ENCODE measurements at regions of chr6 and their contacts with region 1.

Region 1: GRCh38 chr6:116268589-116269293 is 11.0 kb downstream of the TSPYL1 start:
- DNase-seq: peak; percentile 68
- ATAC-seq: peak; percentile 95
- H3K4me3 ChIP-seq: no peak overlapping the region
- H3K27ac ChIP-seq: no peak overlapping the region
- H3K4me1 ChIP-seq: peaks cover 0 to 10% of the 10 kb centered on the region in 2 experiments; a peak in 2 of 4 replicates
- H3K27me3 ChIP-seq: no peaks in the 10 kb centered on the region
- CTCF ChIP-seq: peak; percentile 84 to 99 (median 96)
- POLR2A ChIP-seq: no peak
- RAD21 ChIP-seq: peak; percentile 88

Region 2: DNA sequence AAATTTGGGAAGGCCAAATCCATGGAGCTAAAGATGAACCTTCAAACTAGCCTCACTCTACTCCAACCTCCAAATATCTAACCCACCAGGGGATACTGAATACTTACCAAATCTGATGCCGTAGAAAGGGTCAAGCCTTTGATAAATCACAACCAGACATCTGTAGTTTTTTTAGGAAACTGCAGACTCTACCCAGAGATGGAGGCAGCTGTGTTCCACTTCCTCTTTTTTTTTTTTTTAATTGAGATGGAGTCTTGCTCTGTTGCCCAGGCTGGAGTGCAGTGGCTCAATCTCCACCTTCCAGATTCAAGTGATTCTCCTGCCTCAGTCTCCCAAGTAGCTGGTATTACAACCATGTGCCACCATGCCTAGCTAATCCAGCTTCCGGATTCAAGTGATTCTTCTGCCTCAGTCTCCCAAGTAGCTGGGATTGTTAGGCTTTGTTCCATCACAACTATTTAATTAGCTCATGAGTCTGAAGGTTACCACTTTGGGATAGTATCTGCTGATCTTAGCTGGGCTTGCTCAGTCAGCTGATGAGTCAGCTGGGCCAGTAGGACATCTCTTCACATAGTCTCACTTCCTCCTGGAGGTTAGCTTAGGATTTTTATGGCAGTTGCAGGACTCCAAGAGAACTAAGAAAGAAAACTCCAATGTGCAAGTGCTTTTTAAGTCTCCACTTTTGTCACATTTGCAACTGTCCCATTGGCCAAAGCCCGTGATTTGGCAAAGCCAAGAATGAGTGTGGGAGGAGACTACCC is 221.4 kb before region 1 on chr6:
- CTCF ChIA-PET with region 1: no interaction called
- POLR2A ChIA-PET with region 1: no interaction called
- RAD21 ChIA-PET with region 1: no interaction called
- intact Hi-C with region 1: no loop called
- DNase-seq: no peak
- ATAC-seq: no peak
- H3K4me3 ChIP-seq: no peak overlapping the region
- H3K27ac ChIP-seq: no peak overlapping the region
- H3K4me1 ChIP-seq: peaks cover 0 to 6% of the 10 kb centered on the region in 2 experiments; a peak in 1 of 4 replicates
- H3K27me3 ChIP-seq: no peaks in the 10 kb centered on the region
- CTCF ChIP-seq: no peak
- POLR2A ChIP-seq: no peak
- RAD21 ChIP-seq: no peak

Region 3: DNA sequence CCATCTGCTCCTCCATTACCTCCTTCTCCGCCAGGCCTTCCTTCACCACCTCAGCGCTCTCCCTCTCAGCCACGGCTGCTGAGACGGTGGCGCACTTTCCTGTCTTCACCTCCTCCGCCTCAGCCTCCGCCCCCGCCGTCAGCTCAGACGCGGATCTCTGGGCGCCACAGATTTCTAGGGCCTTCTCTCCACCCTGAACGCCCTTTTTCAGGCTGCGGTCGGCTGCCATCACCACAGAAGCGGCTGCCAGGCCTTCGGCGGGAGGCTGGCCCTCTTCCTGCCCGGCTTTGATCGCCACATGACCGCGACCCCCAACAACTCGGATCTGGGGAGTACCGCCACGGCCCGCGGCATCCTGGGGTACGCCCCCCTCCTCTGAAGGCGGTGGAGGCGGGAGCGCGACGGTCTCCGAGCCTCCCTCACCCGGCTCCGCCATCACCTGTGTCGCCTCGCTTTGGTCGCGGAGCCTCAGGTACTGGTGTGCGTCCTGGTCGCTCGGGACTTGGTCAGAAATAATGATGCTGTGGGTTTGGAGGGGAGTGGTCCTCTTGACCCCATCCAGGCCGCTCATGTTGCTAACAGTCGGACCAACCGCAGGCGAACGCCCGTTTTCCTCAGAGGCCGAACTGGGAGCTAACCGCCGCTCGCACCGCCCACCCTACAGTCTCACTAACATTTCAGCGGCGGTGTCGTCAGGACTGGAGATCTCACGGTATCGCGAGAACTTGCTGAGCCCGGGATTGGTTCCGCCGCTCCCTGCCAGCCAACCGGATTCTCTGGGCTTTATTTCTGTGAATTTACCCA is 10.7 kb after region 1 on chr6 and contains the start of gene TSPYL1:
- CTCF ChIA-PET with region 1: interaction called, 12 read pairs
- POLR2A ChIA-PET with region 1: interaction called, 4 read pairs
- RAD21 ChIA-PET with region 1: no interaction called
- intact Hi-C with region 1: no loop called
- DNase-seq: peak; percentile 92
- ATAC-seq: peak; percentile 98
- H3K4me3 ChIP-seq: peak within 1 kb of the TSS; percentile 92 to 95
- H3K27ac ChIP-seq: peak within 1 kb of the TSS; percentile 85
- H3K4me1 ChIP-seq: peaks cover 6 to 17% of the 10 kb centered on the region in 2 experiments
- H3K27me3 ChIP-seq: no peaks in the 10 kb centered on the region
- CTCF ChIP-seq: 0 out of 6 replicates have a peak, but pooled peaks of 1 of the 3 experiments have one; percentile 10
- POLR2A ChIP-seq: no peak
- RAD21 ChIP-seq: no peak
- total RNA-seq, gene TSPYL1: 70.3 TPM

Region 4: GRCh38 chr6:116561377-116562018 is 292.8 kb after region 1 on chr6:
- CTCF ChIA-PET with region 1: interaction called, 33 read pairs
- POLR2A ChIA-PET with region 1: interaction called, 6 read pairs
- RAD21 ChIA-PET with region 1: interaction called in 1 of 2 experiments, 3 read pairs
- intact Hi-C with region 1: loop called (anchors 2 kb)
- DNase-seq: peak; percentile 55
- ATAC-seq: peak; percentile 80
- H3K4me3 ChIP-seq: no peak overlapping the region
- H3K27ac ChIP-seq: no peak overlapping the region
- H3K4me1 ChIP-seq: peaks cover 3 to 20% of the 10 kb centered on the region in 2 experiments; a peak in 3 of 4 replicates
- H3K27me3 ChIP-seq: no peaks in the 10 kb centered on the region
- CTCF ChIP-seq: peak; percentile 90 to 95 (median 91)
- POLR2A ChIP-seq: no peak
- RAD21 ChIP-seq: peak; percentile 87

Region 5: GRCh38 chr6:116648156-116648555 is 379.4 kb after region 1 on chr6:
- CTCF ChIA-PET with region 1: no interaction called
- POLR2A ChIA-PET with region 1: no interaction called
- RAD21 ChIA-PET with region 1: no interaction called
- intact Hi-C with region 1: loop called (anchors 5 kb)
- DNase-seq: no peak
- ATAC-seq: no peak
- H3K4me3 ChIP-seq: no peak overlapping the region
- H3K27ac ChIP-seq: no peak overlapping the region
- H3K4me1 ChIP-seq: no peaks in the 10 kb centered on the region
- H3K27me3 ChIP-seq: no peaks in the 10 kb centered on the region
- CTCF ChIP-seq: no peak
- POLR2A ChIP-seq: no peak
- RAD21 ChIP-seq: no peak